ENCODE measurements at regions of chr20 and their contacts with region 1.

Region 1: GRCh38 chr20:49668181-49668877 is 45.3 kb downstream of the B4GALT5 start:
- DNase-seq: no peak

Region 2: DNA sequence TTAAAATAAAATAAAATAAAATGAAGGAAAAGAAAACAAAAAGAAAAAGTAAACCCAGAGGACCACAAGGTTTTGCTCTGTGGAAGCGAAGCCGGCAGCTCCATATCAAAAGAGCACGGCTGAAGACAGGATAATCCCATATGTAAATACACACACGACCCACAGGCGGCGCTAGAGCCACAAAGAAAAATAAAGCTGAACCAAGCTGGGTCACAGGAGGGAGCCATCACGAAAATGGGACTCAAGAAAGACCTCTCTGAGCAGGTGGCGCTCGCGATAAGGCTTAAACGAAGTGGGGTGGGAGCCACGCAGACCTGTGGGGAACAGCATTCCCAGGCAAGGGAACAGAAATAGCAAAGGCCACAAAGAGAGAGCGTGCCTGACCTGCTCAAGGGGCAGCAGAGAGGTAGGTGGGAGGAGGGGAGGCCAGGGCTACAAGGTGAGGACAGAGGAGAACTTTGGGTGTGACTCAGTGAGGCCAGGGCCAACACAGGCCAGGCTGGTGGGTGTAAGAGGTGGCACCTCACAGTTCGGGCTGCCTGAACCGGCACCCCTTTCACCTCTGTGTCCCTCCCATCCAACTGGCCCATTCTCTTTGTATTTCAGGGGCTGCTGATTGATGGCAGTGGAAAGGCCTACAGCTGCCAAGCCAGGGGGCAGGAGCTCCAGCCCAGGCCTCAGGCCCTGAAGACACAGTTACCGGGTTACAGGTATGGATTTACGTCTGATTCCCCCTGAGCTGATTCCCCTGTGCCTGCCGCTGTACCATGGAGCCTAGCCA is 126.4 kb before region 1 on chr20:
- in situ Hi-C with region 1: no loop called
- DNase-seq: peak; percentile 74

Region 3: DNA sequence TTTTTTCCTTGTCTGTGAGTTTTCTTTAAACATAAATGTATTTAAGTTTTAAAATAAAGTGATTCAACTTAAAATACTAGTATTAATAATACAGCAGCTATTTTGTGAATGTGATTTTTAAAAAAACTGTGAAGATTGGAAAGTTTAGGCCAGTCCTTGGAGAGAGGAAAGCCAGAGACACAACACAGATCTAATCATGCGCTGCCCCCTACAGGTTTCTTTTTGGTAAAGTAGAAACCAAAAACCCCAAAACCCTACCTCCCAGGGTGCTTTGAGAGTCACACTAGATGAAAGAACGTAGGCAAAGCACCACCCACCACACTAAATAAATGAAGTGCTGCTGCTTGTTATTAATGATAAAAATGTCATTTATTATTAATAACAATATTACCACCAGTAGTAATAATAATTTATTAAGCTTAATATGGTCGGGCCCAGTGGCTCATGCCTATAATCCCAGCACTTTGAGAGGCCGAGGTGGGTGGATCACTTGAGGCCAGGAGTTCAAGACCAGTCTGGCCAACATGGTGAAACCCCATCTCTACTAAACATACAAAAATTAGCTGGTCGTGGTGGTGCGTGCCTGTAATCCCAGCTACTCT is 178.0 kb after region 1 on chr20:
- in situ Hi-C with region 1: loop called (anchors 25 kb)
- DNase-seq: peak; percentile 62